OCI-LY7 (cell line): ENCODE measurements at regions of chr7 and their contacts with region 1.

Region 1: GRCh38 chr7:1979591-1980560 is 252.9 kb downstream of the MAD1L1 start:
- DNase-seq: peak; percentile 86
- H3K4me3 ChIP-seq: peak overlapping the region; percentile 55
- H3K27ac ChIP-seq: peak overlapping the region; percentile 7
- H3K4me1 ChIP-seq: peaks cover 17% of the 10 kb centered on the region
- CTCF ChIP-seq: no peak

Region 2: DNA sequence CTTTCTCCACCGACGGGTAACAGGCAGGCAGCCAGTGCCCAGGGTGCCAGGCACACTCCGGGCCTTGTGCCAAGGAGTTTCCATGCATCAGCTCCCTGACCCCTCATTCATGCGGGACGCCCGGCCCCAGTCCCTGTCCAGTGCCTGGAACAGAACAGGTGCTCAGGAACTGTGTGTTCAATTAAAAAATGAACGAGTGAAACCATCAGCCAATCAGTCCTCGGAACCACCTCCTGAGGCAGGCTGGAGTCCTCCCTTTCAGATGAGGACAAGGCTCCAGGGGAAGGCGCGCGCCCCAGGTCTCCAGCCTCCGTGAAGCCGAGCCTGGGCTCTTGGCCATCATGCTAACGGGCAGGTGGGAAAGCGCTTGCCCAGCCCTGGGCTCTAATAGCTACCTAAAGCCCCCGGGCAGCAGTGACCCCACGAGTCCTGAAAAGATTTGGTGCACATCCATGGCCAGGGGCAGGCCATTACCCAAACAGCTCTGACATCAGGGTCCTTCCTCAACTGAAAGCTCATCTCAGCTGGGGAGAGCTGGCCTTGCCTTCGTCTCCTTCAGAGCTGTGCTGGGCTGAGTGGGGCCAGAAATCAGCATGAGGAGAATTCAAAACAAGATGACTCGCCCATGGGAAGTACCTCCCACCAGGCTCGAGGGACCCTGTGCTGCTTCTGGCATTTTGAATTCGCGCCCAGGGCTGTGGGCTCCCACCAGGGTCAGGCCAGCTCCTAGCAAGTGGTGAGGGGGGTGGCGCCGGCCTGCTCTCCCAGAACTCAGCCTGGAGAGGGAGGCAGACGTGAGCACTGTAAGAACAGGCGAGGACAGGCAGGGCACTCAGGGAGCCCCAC is 52.4 kb after region 1 on chr7:
- CTCF ChIA-PET with region 1: no interaction called
- POLR2A ChIA-PET with region 1: no interaction called
- intact Hi-C with region 1: loop called (anchors 5 kb)
- DNase-seq: no peak
- H3K4me3 ChIP-seq: no peak overlapping the region
- H3K27ac ChIP-seq: peak overlapping the region; percentile 43
- H3K4me1 ChIP-seq: peaks cover 26% of the 10 kb centered on the region
- CTCF ChIP-seq: no peak